ENCODE measurements at regions of chr1 and their contacts with region 1.

Region 1: DNA sequence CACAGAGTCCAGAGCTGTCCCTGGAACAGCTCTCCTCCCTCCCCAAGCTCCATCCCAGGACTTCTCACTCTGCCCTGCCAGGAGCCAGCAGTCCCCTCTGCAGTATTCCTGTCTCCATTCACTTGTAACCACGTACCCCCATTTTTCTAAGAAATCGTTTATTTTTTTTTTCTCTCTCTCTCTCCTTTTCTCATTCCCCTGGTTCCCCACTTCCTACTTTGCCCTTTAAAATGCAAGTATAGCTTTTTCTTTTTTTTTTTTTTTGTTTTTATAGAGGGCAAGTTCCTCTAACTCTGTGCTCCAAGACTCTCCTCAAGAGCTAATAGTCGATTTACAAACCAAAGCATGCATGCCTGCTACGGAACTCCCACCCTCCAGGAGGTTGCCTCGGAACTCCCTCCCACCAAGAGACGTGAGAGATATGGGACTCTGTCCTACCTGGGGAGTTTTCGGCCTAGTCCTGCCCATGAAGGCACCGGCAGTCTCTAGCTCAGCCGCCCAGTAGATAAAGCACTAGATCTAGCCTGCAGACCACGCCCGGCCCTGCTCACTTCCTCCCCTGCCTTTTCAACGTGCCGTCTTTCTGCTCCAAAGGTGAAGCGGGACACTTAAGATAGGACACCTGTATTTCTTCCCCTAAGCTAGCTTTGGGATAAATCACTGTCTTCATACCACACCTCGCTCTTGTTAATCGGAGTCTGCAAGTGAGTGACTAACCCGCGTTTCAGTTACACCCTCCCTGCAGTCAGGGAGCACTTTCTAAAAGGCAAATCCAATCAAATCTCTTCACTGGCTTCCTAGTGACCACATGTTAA is 27.7 kb downstream of the TNFRSF9 start:
- DNase-seq: peak; percentile 33 to 63
- H3K4me3 ChIP-seq: peak overlapping the region; percentile 62
- H3K27ac ChIP-seq: peak overlapping the region; percentile 33; the same call in 1 of the 2 replicates
- H3K4me1 ChIP-seq: no peaks in the 10 kb centered on the region
- H3K27me3 ChIP-seq: no peaks in the 10 kb centered on the region
- CTCF ChIP-seq: no peak

Region 2: DNA sequence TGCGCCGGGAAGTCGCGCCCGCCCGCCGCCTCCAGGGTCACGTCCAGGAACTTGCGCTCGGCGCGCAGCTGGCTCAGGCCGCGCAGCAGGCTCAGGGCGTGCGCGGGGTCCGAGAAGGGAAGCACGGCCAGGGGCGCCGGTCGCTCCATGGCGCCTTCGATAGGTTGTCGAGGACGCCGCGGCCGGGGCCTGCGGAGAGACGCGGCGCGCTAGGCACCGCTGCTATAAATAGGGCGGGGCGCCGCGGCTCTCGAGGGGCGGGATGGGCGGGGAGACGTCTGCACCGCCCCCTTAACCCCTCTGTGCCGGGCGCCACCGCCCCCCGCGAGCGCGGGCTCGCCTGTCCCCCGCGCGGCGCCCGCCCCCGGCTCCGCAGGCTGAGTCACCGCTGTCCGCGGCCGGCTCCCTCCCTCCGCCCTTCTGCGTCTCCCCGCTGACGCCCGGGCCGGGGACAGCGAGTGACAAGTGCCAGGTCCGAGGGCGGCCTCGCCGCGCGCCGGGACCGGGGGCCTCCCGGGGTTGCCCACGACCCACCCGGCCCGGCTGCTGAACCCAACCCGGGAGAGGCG is 1310.2 kb before region 1 on chr1 and contains the start of gene KLHL21:
- CTCF ChIA-PET with region 1: no interaction called
- POLR2A ChIA-PET with region 1: interaction called, 12 read pairs
- intact Hi-C with region 1: no loop called
- DNase-seq: peak; percentile 54 to 90
- H3K4me3 ChIP-seq: peak within 1 kb of the TSS; percentile 86
- H3K27ac ChIP-seq: peak within 1 kb of the TSS; percentile 84
- H3K4me1 ChIP-seq: no peaks in the 10 kb centered on the region
- H3K27me3 ChIP-seq: no peaks in the 10 kb centered on the region
- CTCF ChIP-seq: no peak
- total RNA-seq, gene KLHL21: 20.6 and 24.4 TPM in 2 replicates

Region 3: DNA sequence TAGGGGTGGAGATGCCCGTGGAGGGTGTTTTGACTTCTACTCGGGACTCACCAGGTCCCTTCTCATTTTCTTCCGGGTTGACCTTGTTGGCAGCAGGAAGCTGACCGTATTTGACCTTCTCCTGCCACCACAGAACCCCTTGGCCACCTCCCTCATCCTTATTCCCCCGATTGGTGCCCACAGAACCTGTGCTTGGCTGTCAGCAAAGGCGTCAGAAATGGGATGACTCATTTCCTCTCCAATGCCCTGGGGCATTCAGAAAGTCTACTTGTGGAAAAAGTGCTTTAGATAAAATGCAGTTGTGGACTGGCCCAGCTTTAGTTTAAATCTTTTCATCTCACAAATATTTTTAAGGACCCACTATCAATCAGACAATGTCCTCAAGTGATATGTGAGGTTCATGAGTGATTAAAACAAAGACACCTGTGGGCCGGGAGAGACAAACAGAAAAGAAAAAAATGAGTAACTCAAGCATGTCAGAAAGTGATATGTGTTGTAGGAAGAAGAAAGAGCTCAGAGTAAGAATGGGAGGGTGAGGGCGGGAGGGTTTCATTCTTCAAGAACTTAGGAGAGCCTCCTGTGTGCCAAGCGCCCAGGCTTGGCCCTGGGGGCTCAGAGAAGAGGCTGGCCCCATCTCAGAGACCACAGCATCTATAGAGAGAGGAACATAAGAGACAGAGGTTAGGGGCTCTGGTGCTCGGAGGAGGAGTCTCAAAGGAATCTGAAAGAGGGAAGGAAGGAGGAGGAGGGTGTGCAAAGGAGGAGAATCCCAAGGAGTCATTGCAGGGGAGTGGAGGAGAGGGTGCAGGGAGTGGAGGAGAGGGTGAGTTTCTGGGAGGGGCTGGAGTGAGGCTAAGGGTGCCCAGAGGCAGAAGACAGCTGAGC is 363.4 kb before region 1 on chr1:
- CTCF ChIA-PET with region 1: no interaction called
- POLR2A ChIA-PET with region 1: interaction called, 17 read pairs
- intact Hi-C with region 1: no loop called
- DNase-seq: peak in 1 of 2 experiments; percentile 69
- H3K4me3 ChIP-seq: no peak overlapping the region
- H3K27ac ChIP-seq: no peak overlapping the region
- H3K4me1 ChIP-seq: no peaks in the 10 kb centered on the region
- H3K27me3 ChIP-seq: peaks cover 11% of the 10 kb centered on the region; the same call in 1 of the 2 replicates
- CTCF ChIP-seq: no peak

Region 4: DNA sequence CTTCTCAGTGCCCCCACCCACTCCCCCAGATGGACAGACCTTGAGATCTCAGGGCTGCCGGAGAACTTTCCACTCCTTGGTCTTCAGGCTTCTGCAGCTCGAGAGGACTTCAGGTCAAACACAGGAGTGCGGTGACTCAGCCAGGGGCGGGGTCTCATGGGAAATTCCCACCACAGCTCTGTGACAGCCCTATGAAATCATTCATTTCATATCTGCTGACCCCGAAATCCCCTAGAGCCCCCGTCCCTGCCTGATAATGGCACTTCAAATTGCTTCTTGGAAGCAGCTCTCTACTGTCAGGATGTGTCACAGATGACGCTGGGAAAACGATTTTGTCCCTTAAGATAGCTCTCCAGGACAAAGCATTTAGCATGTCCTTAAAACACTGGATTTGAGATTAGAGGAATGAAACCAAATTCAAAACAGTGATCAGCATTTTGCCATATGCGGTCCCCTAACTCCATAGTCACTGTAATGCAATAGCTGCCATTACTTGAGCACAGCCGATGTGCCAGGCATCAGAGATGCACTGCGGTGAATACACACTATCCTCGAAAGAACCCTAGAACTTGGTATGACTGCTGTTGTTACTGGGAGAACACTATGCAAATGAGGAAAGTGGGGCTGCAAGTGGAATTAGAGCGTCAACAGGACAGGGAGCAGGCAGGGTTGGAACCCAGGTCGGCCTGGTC is 27.9 kb after region 1 on chr1 and contains the start of gene TNFRSF9:
- CTCF ChIA-PET with region 1: no interaction called
- POLR2A ChIA-PET with region 1: interaction called, 12 read pairs
- intact Hi-C with region 1: no loop called
- DNase-seq: peak; percentile 42 to 48
- H3K4me3 ChIP-seq: no peak within 1 kb of the TSS
- H3K27ac ChIP-seq: no peak within 1 kb of the TSS
- H3K4me1 ChIP-seq: peaks cover 14% of the 10 kb centered on the region
- H3K27me3 ChIP-seq: no peaks in the 10 kb centered on the region
- CTCF ChIP-seq: no peak
- total RNA-seq, gene TNFRSF9: 0.70 and 1.3 TPM in 2 replicates

Region 5: GRCh38 chr1:8004803-8005554 is 92.0 kb after region 1 on chr1:
- CTCF ChIA-PET with region 1: no interaction called
- POLR2A ChIA-PET with region 1: no interaction called
- intact Hi-C with region 1: no loop called
- DNase-seq: peak; percentile 70 to 91
- H3K4me3 ChIP-seq: no peak overlapping the region
- H3K27ac ChIP-seq: peak overlapping the region; percentile 83
- H3K4me1 ChIP-seq: peaks cover 31% of the 10 kb centered on the region
- H3K27me3 ChIP-seq: no peaks in the 10 kb centered on the region
- CTCF ChIP-seq: no peak